ENCODE measurements at regions of chr19 and their contacts with region 1.

Region 1: DNA sequence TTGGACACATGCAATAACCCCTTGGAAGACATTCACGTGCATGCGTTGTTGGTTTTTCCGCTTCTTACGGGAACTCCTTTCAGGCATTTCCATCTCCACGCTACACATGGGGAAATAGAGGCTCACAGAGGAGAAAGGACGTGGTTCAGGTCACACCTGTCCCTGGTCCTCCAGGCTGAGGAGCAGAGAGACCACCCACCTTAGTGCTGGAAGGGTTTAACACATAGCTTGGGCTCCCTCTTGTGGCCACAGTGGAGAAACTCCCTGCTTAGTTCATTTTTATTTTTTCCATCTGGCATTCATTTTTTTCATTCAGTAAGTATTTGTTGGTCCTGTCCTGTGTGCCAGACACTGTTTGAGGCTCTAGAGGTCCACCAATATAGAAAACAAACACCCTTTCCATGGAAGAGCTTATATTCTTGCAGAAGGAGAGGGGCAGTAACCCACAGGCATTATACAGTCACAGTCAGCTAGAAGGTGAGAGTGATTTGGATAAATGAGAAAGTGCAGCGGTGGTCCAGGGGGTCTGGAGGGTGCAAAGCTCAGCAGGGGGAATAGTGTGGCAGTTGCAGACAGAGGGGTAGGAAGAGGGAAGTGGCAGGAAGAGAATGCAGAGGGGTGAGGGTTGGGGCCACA is 24.2 kb upstream of the TTYH1 start:
- DNase-seq: peak; percentile 83
- ATAC-seq: peak; percentile 28
- H3K4me3 Mint-ChIP-seq: no peak overlapping the region
- H3K27ac Mint-ChIP-seq: no peak overlapping the region
- H3K4me1 Mint-ChIP-seq: peaks cover 40% of the 10 kb centered on the region
- H3K27me3 Mint-ChIP-seq: peaks cover 4% of the 10 kb centered on the region

Region 2: DNA sequence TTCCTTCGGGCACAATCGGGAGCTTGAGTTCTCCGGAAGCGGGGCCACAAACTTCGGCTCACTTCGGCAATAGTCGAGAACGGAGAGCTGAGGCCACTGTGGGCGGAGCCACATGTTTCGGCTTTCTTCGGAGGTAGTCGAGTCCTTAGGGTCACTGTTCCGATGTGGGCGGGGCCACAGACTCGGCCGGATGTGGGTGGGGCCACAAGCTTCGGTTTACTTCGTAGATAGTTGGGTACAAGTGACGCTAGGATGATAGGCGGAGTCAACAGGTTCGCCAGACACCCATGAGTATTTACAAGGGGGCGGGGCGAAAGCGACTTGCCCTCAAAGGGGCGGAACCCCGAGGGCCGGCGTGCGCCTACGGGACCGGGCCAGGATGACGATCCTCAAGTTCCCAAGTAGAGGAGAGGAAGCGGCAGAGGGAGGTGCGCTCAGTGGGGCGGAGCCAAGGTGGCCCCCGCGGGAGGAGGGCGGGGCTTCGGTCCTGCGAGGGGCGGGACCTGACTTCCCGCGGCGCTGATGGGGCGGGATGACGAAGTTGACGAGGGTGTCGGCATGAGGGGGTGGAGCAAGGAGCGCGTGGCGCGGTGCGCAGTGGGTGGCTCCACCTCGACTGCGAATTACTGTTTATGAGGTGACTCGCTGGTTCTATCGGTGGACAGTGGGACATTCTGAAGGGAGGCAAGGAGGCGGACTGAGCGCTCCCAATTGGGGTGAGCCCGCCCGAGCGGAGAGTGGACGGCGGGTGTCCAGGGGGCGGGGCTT is 201.1 kb before region 1 on chr19:
- CTCF ChIA-PET with region 1: interaction called, 10 read pairs
- POLR2A ChIA-PET with region 1: interaction called, 3 read pairs
- DNase-seq: peak; percentile 100
- ATAC-seq: peak; percentile 63
- H3K4me3 Mint-ChIP-seq: peak overlapping the region; percentile 82
- H3K27ac Mint-ChIP-seq: peak overlapping the region; percentile 98
- H3K4me1 Mint-ChIP-seq: peaks cover 39% of the 10 kb centered on the region
- H3K27me3 Mint-ChIP-seq: no peaks in the 10 kb centered on the region

Region 3: GRCh38 chr19:54316746-54317107 is 74.3 kb before region 1 on chr19:
- CTCF ChIA-PET with region 1: interaction called, 184 read pairs
- POLR2A ChIA-PET with region 1: no interaction called
- DNase-seq: peak; percentile 39
- ATAC-seq: no peak
- H3K4me3 Mint-ChIP-seq: no peak overlapping the region
- H3K27ac Mint-ChIP-seq: no peak overlapping the region
- H3K4me1 Mint-ChIP-seq: peaks cover 5% of the 10 kb centered on the region
- H3K27me3 Mint-ChIP-seq: peaks cover 26% of the 10 kb centered on the region

Region 4: GRCh38 chr19:54352546-54352945 is 38.5 kb before region 1 on chr19:
- CTCF ChIA-PET with region 1: interaction called, 67 read pairs
- POLR2A ChIA-PET with region 1: interaction called, 3 read pairs
- DNase-seq: no peak
- ATAC-seq: no peak
- H3K4me3 Mint-ChIP-seq: no peak overlapping the region
- H3K27ac Mint-ChIP-seq: no peak overlapping the region
- H3K4me1 Mint-ChIP-seq: peaks cover 5% of the 10 kb centered on the region
- H3K27me3 Mint-ChIP-seq: peaks cover 13% of the 10 kb centered on the region

Region 5: GRCh38 chr19:54373781-54374631 is 17.1 kb before region 1 on chr19:
- CTCF ChIA-PET with region 1: interaction called, 67 read pairs
- POLR2A ChIA-PET with region 1: interaction called, 23 read pairs
- DNase-seq: no peak
- ATAC-seq: no peak
- H3K4me3 Mint-ChIP-seq: peak overlapping the region; percentile 75
- H3K27ac Mint-ChIP-seq: peak overlapping the region; percentile 90
- H3K4me1 Mint-ChIP-seq: peaks cover 87% of the 10 kb centered on the region
- H3K27me3 Mint-ChIP-seq: peaks cover 2% of the 10 kb centered on the region

Region 6: DNA sequence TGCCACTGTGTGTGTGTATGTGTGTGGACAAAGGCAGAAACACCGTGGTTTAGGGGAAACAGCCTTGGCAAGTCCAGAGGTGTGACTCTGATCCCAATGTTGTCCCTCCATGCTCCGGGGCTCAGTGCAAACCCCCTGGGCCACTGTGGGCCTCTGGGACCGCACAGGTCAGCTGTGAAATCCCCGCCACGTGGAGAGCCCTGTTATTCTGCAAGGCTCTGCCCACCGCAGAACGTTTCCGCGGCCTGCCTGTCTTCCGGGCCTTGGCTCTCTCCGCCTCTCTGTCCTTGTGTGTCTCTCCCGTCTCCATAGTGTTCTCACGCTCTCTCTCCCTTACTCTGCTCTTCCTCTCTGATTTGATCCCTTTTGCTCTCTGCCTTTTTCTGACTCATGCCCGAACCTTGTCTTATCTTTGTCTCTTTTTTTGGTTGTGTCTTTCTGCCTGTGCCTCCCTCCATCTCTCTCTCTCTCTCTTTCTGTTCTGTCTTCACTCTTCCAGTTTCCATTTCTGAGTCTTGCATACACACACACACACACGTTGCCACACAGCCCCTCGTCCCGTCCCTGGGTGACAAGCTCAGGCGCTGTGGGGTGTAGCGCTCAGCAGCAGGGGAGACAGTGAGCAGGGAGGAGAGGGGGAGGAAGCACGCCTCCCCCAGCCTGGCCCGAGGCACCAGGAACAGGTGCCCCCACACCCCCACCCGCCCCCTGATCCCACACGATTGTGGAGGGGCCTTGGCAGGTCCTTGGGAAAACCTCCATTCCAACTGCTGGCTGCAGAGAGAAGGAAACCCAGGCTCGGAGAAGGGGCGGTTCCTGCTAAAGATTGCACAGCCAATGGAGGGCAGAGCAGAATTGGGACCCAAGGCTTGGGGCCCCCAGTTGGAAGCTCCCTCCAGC is 27.2 kb after region 1 on chr19:
- CTCF ChIA-PET with region 1: interaction called, 13 read pairs
- POLR2A ChIA-PET with region 1: no interaction called
- DNase-seq: peak; percentile 75
- ATAC-seq: peak; percentile 82
- H3K4me3 Mint-ChIP-seq: peak overlapping the region; percentile 57
- H3K27ac Mint-ChIP-seq: peak overlapping the region; percentile 84
- H3K4me1 Mint-ChIP-seq: peaks cover 16% of the 10 kb centered on the region
- H3K27me3 Mint-ChIP-seq: peaks cover 26% of the 10 kb centered on the region

Region 7: GRCh38 chr19:54473021-54473891 is 82.2 kb after region 1 on chr19 and contains the start of gene CDC42EP5:
- CTCF ChIA-PET with region 1: no interaction called
- POLR2A ChIA-PET with region 1: no interaction called
- DNase-seq: no peak
- ATAC-seq: peak; percentile 43
- H3K4me3 Mint-ChIP-seq: no peak within 1 kb of the TSS
- H3K27ac Mint-ChIP-seq: no peak within 1 kb of the TSS
- H3K4me1 Mint-ChIP-seq: peaks cover 12% of the 10 kb centered on the region
- H3K27me3 Mint-ChIP-seq: peaks cover 56% of the 10 kb centered on the region
- total RNA-seq, gene CDC42EP5: not detected

Measured in activated CD8-positive, alpha-beta T cell treated with anti-CD3 and anti-CD28 coated beads, Interleukin-2, amount 10 ng/mL, durations not matched to agents 7 days and 5 days (primary cell).